ENCODE measurements at regions of chr2 and their contacts with region 1.

Region 1: DNA sequence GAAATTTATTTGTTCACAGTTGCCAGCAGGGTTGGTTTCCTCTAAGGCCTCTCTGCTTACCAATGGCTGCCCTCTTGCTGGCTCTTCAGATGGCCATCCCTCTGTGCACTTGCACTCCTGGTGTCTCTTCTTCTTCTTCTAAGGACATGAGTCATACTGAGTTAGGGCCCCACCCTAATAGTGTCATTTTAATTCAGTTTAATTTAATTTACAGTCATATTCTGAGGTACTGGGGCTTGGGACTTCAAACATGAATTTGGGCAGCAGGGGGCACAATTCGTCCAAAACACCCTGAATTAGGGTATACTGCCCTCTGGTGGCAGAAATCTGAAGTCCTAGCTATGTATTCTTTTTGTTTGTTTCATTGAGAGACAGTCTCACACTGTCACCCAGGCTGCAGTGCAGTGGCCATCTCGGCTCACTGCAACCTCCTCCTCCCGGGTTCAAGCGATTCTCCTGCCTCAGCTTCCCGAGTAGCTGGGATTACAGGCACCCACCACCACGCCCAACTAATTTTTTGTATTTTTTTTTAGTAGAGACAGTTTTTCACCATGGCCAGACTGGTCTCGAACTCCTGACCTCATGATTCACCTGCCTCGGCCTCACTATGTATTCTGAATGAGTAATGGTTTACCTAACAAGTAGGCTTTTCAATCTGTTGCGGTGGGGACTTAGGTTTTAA is 19.8 kb downstream of the SLC4A1AP start:
- DNase-seq: peak; percentile 93
- ATAC-seq: peak; percentile 86
- H3K4me3 Mint-ChIP-seq: no peak overlapping the region
- H3K27ac Mint-ChIP-seq: peak overlapping the region; percentile 90
- H3K4me1 Mint-ChIP-seq: peaks cover 46% of the 10 kb centered on the region
- H3K27me3 Mint-ChIP-seq: no peaks in the 10 kb centered on the region

Region 2: DNA sequence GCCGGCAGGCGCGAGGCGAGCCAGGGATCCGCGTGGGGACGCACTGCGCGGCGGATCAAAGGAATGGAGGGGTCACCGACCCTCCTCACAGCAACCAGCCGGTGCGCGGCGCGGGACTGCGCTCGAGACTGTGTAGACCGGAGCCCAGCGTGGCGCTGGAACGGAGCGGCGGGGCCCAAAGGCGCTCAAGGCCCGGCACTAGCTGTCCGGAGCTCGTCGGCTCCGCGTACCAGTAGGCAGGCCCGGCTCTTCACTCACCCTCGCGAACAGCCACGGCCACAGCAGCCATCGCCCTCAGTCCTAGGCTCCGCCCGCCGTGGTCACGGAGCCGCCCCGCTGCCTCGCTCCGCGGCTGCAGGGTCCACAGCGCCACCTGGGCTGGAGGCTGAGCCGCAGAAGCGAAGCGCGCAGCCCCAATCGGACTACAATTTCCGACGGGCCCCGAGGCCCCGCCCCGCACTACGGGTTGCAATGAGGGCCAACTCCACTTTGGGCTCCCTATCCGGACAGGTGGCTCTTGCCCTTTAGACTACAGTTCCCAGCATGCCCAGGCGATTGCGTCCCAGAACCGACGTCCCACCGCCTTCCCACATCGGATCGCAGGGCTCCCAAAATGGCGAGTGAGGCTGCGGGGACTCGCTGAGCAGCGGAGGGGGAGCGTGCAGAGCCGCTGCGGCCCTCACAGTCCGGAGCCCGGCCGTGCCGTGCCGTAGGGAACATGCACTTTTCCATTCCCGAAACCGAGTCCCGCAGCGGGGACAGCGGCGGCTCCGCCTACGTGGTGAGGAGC is 313.3 kb before region 1 on chr2 and contains the starts of genes EIF2B4 and SNX17:
- CTCF ChIA-PET with region 1: interaction called, 14 read pairs
- DNase-seq: peak; percentile 100
- ATAC-seq: peak; percentile 93
- H3K4me3 Mint-ChIP-seq: peak within 1 kb of the TSS; percentile 84
- H3K27ac Mint-ChIP-seq: peak within 1 kb of the TSS; percentile 96
- H3K4me1 Mint-ChIP-seq: peaks cover 37% of the 10 kb centered on the region
- H3K27me3 Mint-ChIP-seq: no peaks in the 10 kb centered on the region
- total RNA-seq, gene EIF2B4: 38.6 to 43.1 TPM
- total RNA-seq, gene SNX17: 101 to 125 TPM

Region 3: DNA sequence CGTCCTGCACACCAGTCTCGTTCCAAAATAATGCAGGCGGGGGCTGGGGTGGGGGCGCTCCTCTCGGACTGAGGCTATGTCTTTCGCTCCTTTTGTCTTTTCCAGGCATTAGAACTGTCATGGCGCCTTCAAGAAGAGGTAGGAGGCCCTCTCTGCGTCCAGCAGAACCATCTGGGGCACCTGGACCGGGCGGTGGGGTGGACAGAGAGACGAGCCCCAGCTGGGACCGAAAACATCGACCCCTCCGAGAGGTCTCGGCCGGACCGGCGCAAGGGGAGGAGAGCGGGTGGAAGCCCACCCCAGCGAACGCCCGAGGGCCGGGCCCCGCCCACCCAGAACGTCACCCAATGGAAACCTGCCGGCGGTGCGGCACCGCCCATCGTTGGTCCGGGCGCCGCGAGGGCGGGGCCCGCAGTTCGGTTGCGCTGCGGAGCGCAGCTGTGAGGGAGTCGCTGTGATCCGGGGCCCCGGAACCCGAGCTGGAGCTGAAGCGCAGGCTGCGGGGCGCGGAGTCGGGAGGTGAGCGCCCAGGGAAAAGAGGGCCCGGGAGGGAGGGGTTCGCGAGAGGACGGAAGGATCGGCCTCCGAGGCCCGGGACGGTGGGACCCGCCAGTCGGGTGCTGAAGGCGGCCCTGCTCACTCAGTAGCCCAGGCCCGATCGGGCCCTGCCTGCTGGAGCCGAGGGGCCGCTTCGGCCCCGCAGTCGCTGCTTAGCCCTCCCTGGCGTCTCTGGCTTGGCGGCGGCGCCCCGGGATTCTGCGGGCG is 255.1 kb before region 1 on chr2 and contains the start of gene NRBP1:
- CTCF ChIA-PET with region 1: interaction called, 33 read pairs
- DNase-seq: peak; percentile 94
- ATAC-seq: peak; percentile 89
- H3K4me3 Mint-ChIP-seq: peak within 1 kb of the TSS; percentile 96
- H3K27ac Mint-ChIP-seq: peak within 1 kb of the TSS; percentile 97
- H3K4me1 Mint-ChIP-seq: peaks cover 31% of the 10 kb centered on the region
- H3K27me3 Mint-ChIP-seq: peaks cover 3% of the 10 kb centered on the region
- total RNA-seq, gene NRBP1: 88.5 to 103 TPM

Region 4: GRCh38 chr2:27520316-27520715 is 163.2 kb before region 1 on chr2:
- CTCF ChIA-PET with region 1: no interaction called
- DNase-seq: no peak
- ATAC-seq: no peak
- H3K4me3 Mint-ChIP-seq: no peak overlapping the region
- H3K27ac Mint-ChIP-seq: no peak overlapping the region
- H3K4me1 Mint-ChIP-seq: no peaks in the 10 kb centered on the region
- H3K27me3 Mint-ChIP-seq: peaks cover 23% of the 10 kb centered on the region

Region 5: DNA sequence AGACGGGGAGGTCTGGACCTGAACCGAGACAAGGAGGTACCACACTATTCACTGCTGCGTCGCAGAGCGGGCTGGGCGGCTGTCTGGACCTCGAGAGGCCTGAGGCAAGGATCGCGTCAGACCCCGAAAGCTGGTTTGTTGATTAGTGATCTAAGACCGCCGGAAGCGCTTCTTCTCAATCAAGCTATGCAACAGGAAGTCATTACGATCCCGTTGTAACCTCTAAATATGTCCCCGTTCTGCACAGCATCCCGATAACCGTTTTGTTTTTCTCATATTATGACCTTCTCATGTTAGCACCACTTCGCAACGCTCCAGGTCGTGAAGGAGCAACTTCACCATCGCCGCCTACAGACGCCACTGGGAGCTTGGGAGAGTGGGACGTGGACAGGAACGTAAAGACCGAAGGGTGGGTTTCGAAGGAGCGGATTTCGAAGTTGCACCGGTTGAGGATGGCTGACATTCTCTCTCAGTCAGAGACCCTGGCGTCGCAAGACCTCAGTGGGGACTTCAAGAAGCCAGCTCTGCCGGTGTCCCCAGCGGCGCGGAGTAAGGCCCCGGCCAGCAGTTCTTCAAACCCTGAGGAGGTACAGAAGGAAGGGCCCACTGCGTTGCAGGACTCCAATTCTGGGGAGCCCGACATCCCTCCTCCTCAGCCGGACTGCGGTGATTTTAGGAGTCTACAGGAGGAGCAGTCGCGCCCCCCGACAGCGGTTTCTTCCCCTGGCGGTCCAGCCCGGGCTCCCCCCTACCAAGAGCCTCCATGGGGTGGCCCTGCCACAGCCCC is 19.9 kb before region 1 on chr2 and contains the starts of genes SLC4A1AP and SUPT7L:
- CTCF ChIA-PET with region 1: interaction called, 81 read pairs
- DNase-seq: peak; percentile 82
- ATAC-seq: peak; percentile 86
- H3K4me3 Mint-ChIP-seq: peak within 1 kb of the TSS; percentile 92
- H3K27ac Mint-ChIP-seq: peak within 1 kb of the TSS; percentile 100
- H3K4me1 Mint-ChIP-seq: peaks cover 47% of the 10 kb centered on the region
- H3K27me3 Mint-ChIP-seq: no peaks in the 10 kb centered on the region
- total RNA-seq, gene SLC4A1AP: 27.8 to 28.2 TPM
- total RNA-seq, gene SUPT7L: 34.8 to 39.7 TPM

Region 6: GRCh38 chr2:27703638-27704341 is 20.3 kb after region 1 on chr2:
- CTCF ChIA-PET with region 1: interaction called, 143 read pairs
- DNase-seq: peak; percentile 91
- ATAC-seq: peak; percentile 91
- H3K4me3 Mint-ChIP-seq: no peak overlapping the region
- H3K27ac Mint-ChIP-seq: peak overlapping the region; percentile 72
- H3K4me1 Mint-ChIP-seq: peaks cover 29% of the 10 kb centered on the region
- H3K27me3 Mint-ChIP-seq: no peaks in the 10 kb centered on the region